ENCODE measurements at regions of chr6 and their contacts with region 1.

Region 1: DNA sequence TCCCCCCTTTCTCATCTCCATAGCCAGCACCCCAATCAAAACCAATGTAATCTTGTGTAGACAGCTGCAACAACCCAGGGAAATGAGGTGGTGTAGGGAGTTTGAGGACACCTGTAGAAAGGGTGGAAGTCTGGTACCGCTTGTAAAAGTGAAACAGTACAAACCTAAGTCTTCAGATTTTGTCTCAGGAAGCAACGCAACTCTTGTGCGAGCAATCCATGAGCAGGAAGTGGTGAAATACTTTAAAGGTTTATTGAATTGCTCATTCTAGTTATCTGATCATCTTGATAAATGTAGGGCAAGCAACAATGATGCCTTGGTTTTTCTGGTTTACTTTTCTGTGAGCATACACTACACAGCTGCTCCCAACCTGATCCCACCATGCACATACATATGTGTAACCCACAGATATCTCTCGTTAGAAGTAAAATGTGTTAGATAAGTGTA is 71.1 kb upstream of the THEMIS start:
- DNase-seq: no peak

Region 2: DNA sequence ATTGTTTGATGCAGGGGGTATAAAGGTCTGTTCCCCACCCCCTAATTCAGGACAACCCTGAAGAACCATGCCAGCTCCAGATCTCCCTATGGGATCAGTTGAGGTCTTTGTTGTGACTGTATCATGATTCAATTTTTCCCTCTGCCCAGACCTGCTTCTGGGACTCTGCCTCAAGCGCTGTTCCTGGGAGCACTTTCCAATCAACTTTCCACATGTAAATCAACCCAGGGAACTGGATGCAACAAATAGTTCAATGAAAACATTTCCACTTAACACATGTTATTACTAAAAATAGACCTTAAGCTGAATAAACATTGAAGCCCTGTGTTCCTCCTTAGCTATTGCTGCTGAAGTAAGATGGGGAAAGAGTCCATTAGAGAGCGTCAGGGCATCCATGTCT is 255.5 kb before region 1 on chr6:
- intact Hi-C with region 1: no loop called
- DNase-seq: no peak

Region 3: DNA sequence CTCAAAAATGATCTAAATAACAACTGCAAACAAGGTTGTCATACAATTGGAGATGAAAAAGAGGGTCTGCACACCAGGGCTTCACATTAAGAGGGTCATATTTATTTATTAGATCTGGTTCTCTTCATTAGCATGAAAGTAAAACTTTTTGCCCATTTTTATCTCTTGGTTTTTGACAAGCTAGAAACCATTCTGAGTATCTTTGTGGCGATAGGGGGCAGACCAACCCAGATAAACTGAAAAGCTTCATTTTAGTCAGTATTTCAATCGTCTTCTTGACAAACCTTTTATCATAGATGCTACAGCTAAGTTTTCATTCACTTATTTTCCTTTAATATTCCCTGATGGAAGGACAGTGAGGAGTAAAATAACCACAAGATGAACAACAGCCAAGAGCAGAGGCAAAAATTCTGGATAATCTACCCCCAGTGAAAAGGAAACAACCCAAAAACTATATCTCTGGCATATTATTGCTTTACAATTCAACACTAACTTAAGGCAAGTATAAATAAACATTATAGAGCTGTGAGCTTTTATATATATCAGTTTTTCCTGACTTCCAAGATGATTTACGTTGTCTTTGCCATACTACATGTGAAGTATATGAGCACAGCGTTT is 116.3 kb before region 1 on chr6:
- intact Hi-C with region 1: loop called (anchors 10 kb)
- DNase-seq: peak in 5 of 10 donors; percentile 8 to 63 (median 38)

Region 4: DNA sequence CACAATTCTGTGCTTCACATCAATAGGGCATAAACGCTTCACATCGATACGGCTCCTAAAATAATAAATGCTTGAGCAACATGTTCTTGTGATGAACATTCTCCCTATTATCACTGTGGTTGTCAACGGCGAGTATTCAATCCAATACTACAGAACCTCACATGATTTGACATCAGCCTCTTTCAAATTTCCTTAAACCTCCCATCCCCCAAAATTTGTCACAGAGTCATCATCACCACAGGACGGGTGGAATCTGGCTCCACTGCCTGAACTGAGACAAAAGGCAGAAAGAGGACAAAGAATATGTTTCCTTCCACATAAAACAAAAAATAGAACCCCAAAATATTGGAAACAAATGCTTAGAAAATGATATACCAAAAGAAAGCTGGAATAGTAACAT is 78.4 kb before region 1 on chr6:
- intact Hi-C with region 1: no loop called
- DNase-seq: no peak

Measured in posterior cingulate gyrus (tissue), 11 donors.